ENCODE measurements at regions of chr6 and their contacts with region 1.

Region 1: DNA sequence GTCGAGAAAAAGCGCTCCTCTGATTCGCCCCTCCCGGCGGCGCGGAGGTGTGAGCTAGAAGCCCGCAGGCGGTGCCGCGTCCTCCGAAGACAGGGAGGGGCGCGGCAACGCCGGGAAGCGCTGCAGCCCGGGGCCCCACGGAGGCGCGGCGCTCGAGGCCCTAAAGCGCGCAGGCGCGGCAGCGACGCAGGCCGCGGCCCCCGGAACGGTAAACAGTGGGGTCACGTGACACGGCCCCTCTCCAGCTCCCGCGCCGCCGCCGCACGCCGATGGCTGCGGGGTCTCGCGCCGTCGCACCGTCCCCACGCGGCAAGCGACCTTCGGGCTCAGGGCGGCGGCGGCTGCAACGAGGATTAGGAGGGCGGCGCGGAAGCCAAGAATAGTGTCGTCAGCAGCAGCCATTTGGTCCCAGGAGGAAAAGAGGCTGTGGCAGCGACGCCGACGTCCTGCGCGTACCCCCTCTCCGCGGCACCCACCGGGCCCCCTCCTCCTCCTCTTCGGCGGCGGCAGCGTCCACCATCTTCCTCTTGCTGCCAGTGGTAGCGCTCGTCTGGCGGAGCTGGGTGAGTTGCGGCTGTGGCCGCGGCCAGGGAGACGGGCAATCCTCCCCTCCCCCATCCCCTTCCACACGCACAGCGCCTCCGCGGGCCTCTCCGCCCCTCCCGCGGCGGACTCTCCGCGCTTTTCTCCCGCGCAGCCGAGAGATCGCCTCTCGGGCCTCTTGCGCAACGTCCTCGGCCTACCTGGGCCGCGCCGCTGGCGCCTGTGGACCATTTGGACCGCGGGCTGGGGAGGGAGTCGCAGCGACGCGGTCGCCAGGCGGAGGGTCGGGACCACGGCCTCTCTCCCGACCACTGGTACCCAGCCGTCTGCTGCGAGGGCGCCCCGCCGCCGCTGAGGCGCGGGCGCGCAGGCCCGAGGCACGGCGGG is at the start of gene PHF3:
- DNase-seq: peak; percentile 92

Region 2: DNA sequence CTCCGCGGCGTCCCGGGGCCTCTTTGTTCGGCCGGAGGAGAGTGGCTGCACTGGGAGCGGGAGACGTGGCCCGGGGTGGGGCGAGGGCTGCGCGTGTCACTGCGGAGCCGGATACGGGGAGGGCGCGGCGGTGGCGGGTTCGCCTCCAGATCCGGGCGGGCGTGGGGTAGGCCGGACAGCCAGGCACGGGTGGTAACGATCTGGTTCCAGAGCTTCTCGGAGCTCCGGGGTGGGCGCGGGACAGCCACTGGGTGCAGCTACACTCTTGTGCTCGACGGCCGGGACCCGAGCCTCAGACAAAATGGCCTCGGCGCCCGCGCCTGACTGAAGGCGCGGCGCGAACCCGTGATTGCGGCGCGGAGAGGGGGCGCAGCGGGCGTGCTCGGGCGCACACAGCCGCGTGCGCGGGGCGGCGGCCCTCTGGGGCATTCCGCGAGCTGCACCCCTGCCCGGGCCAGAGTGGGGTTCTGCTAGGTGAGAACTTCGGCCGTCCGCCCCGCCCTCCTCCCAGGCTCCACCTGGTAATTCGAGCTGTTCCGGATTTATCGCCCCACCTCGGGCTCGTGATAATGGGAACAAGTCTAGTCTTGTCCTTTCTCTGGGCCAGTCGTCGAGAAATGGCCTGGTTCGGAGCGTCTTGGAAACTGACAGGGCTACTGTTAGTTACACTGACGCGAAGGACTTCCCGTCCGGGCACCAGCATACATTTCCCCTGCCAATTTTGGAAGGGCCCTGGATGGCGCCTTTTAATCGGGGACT is 62.5 kb before region 1 on chr6:
- CTCF ChIA-PET with region 1: no interaction called
- POLR2A ChIA-PET with region 1: interaction called, 10 read pairs
- DNase-seq: peak; percentile 41

Region 3: DNA sequence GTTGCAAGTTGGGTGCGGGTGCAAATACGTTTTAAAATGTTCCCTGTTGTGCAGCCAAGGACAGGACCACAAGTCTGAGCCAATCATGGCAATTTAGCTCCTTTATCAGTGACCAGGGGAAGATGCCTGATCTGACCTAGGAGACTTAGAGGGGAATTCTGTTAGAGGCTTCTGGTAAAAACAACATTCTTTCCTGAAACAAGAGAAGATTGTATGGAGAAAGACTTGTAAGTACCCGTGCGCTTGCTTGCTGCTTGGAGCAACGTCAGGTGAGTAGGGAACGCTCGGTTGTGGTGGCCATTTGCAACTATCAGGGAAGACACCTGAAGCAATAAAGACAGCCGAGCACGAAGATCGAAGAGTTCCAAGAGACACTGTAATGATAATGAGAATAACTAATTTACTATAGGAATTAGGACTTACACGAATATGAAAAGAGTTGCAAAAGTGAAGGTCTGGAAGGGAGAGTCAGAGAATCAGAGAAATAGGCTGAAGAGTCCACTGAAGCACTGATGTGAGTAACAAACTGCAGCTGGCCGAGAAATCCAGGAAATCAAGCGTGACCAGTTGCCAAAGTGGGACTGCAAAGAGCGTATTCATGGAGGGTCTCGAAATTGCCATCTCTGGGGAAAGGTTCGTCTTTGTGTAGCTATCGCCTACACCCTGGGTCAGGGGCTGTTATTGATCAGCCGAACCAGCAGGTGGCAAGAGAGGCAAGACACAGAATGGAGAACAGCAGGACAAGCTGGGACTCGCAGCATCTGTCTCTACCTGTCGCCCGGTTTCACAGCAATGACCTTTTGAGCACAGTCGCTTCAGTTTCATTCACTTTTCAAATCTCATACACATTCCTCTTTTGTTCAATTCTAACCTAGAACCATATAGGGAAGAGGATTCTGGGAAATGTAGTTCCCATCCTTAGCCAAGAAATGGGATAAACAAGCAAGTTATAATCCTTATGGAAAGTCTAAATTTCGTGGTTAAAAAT is 37.5 kb before region 1 on chr6:
- CTCF ChIA-PET with region 1: interaction called, 16 read pairs
- POLR2A ChIA-PET with region 1: interaction called, 22 read pairs
- DNase-seq: peak; percentile 76